ENCODE measurements at regions of chr15 and their contacts with region 1.

Region 1: GRCh38 chr15:26572602-26573350 is 200.1 kb downstream of the GABRB3 start:
- DNase-seq: no peak
- H3K4me3 ChIP-seq: no peak overlapping the region
- H3K27ac ChIP-seq: no peak overlapping the region
- H3K4me1 ChIP-seq: no peaks in the 10 kb centered on the region
- H3K27me3 ChIP-seq: no peaks in the 10 kb centered on the region
- CTCF ChIP-seq: no peak
- EP300 ChIP-seq: no peak
- POLR2A ChIP-seq: no peak

Region 2: DNA sequence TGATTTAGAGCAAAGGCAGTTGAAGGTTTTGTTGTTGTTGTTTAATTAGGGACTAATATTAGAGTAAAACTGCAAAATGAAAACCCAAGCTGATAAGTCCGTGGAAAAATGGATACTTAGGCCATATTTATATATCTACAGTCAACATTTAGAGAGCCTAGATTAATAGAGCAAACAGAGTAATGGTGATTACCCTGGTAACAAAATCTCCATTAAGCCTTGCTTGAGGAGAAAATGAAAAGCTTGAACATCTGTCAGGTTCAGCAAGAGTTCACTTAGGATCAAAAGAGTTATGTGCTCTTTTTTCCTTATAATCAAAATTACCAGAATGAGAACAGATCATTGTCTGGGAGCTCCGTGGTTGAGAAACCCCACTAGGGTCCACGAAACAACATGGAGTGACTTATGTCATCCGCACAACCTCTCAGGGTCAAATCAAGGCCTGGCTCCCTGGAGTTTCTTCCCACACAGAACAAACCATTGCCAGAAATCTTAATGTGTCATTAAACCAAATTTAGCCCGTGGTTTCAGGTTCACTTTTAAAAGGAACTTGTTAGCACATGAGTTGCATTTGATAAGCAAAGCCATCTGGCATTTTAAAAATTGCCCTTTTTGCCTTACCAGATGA is 181.1 kb before region 1 on chr15:
- intact Hi-C with region 1: loop called in 1 of 4 experiments (anchors 5 kb)
- DNase-seq: no peak
- H3K4me3 ChIP-seq: no peak overlapping the region
- H3K27ac ChIP-seq: no peak overlapping the region
- H3K4me1 ChIP-seq: no peaks in the 10 kb centered on the region
- H3K27me3 ChIP-seq: no peaks in the 10 kb centered on the region
- CTCF ChIP-seq: no peak
- EP300 ChIP-seq: no peak
- POLR2A ChIP-seq: no peak

Measured in ovary (tissue), 10 donors.